Adrenal gland (tissue), 19 donors: ENCODE measurements at regions of chr17 and their contacts with region 1.

Region 1: DNA sequence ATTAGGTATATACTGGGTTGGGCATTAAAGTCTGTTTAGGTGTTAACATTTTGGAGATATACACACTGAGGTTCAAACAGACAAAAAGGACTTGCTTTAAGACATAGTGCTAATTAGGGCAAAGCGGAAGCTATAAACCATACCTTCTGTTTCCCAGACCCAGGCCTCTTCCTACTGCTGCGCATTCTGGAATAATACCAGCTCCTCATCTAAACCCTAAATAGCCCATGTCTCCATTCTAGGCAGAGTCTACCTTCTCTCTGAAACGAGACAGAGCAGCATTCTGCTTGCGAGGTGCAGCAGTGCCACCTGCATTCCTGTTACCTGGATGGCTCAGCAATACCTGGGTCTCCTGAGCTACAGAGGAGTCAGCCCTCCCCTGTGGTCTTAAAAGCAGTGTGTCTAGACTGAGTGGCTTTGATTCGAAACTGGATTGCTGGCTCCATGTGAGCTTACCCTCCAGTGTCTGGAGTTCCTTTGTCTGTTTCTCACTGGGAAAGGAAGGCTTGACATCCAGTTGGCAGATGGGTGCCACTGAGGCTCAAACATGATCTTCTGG is 6.4 kb downstream of the YPEL2 start:
- DNase-seq: no peak
- H3K4me3 ChIP-seq: no peak overlapping the region
- H3K27ac ChIP-seq: no peak overlapping the region
- H3K4me1 ChIP-seq: peaks cover 9 to 43% of the 10 kb centered on the region in 2 donors
- H3K27me3 ChIP-seq: no peaks in the 10 kb centered on the region
- CTCF ChIP-seq: no peak
- POLR2A ChIP-seq: no peak

Region 2: GRCh38 chr17:59415397-59415796 is 77.6 kb after region 1 on chr17:
- intact Hi-C with region 1: loop called in 1 of 2 experiments (anchors 5 kb)
- DNase-seq: no peak
- H3K4me3 ChIP-seq: no peak overlapping the region
- H3K27ac ChIP-seq: no peak overlapping the region
- H3K4me1 ChIP-seq: no peaks in the 10 kb centered on the region
- H3K27me3 ChIP-seq: no peaks in the 10 kb centered on the region
- CTCF ChIP-seq: no peak
- POLR2A ChIP-seq: no peak